Activated CD4-positive, alpha-beta memory T cell treated with anti-CD3 and anti-CD28 coated beads for 36 hours (primary cell): ENCODE measurements at regions of chr10 and their contacts with region 1.

Region 1: DNA sequence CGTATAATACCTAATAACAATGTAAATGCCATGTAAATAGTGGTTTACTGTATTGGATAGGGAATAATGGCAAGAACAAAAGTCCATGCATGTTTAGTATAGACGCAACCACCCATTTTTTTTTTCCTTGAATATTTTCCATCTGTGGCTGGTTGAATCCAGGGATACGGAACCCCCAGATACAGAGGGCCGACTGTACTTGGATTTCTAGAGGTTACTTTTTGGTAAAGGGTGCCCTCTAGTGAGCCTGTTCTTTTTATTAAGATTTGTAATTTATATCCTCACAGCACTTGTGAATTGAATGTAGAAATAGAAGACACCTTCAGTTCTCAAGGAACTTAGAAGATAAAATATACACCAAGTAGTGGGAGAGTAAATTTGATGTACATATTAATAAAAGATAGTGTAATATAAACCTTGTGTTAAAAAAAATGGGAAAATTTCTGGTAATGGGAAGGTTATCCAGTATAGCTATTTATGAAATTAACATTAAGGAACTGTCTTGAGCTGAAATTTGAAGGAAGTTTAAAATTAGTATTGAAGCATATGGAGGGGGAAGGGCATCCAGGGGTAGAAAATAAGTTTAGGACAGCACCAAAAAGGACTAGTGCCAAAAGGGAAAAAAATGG is 32.0 kb downstream of the EXOC6 start:
- DNase-seq: no peak
- H3K4me3 Mint-ChIP-seq: no peak overlapping the region
- H3K27ac Mint-ChIP-seq: no peak overlapping the region
- H3K4me1 Mint-ChIP-seq: peaks cover 21% of the 10 kb centered on the region
- H3K27me3 Mint-ChIP-seq: no peaks in the 10 kb centered on the region

Region 2: GRCh38 chr10:91257310-91257709 is 1623.0 kb before region 1 on chr10:
- CTCF ChIA-PET with region 1: no interaction called
- POLR2A ChIA-PET with region 1: no interaction called
- intact Hi-C with region 1: no loop called
- DNase-seq: no peak
- H3K4me3 Mint-ChIP-seq: no peak overlapping the region
- H3K27ac Mint-ChIP-seq: no peak overlapping the region
- H3K4me1 Mint-ChIP-seq: no peaks in the 10 kb centered on the region
- H3K27me3 Mint-ChIP-seq: no peaks in the 10 kb centered on the region

Region 3: DNA sequence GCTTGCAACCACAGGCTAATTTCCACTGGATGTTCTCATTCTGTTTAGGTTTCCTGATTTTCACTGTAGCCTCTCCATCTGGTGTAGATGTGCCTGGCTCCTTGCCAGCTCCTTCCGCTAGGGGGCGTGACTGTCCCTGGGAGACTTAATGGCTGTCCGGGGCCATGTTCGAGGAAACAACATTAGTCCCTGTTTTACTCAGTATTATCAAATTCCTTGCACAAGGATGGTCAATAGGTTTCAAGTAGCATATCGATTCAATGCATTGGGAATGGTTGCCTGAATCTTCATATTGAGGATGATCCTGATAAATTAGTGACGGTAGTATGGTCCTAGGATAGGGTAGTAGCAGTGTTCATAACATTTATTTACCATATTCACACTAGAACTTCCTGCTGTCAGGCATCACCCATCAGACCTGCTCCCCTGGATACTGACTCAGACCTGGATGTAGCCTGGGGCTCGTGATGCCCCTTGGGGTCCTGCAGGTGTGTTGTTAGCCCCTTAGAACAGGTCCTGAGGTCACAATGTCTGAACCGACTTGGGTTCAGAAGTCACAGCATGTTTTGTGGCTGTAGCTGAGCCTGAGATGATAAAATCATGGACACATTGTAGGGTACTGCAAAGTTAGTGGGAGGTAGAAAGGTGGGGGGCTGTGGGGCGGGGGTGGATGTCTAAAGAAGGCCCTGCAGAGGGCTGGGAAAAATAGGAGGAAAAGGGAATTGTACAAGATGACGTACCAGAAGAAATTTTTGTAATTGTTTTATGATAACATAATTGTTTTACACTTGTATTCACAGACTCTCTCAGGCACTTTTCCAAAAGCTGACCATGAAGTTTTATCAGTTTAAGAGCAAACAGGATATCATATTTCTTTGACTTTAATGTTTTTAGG is 40.9 kb before region 1 on chr10:
- CTCF ChIA-PET with region 1: interaction called, 22 read pairs
- POLR2A ChIA-PET with region 1: no interaction called
- intact Hi-C with region 1: loop called (anchors 1 kb)
- DNase-seq: peak; percentile 75
- H3K4me3 Mint-ChIP-seq: no peak overlapping the region
- H3K27ac Mint-ChIP-seq: no peak overlapping the region
- H3K4me1 Mint-ChIP-seq: peaks cover 4% of the 10 kb centered on the region
- H3K27me3 Mint-ChIP-seq: no peaks in the 10 kb centered on the region

Region 4: GRCh38 chr10:93039721-93040120 is 159.4 kb after region 1 on chr10:
- CTCF ChIA-PET with region 1: no interaction called
- POLR2A ChIA-PET with region 1: no interaction called
- intact Hi-C with region 1: loop called (anchors 2 kb)
- DNase-seq: no peak
- H3K4me3 Mint-ChIP-seq: no peak overlapping the region
- H3K27ac Mint-ChIP-seq: no peak overlapping the region
- H3K4me1 Mint-ChIP-seq: no peaks in the 10 kb centered on the region
- H3K27me3 Mint-ChIP-seq: no peaks in the 10 kb centered on the region

Region 5: GRCh38 chr10:93293999-93294398 is 413.7 kb after region 1 on chr10:
- CTCF ChIA-PET with region 1: no interaction called
- POLR2A ChIA-PET with region 1: no interaction called
- intact Hi-C with region 1: loop called (anchors 10 kb)
- DNase-seq: no peak
- H3K4me3 Mint-ChIP-seq: no peak overlapping the region
- H3K27ac Mint-ChIP-seq: no peak overlapping the region
- H3K4me1 Mint-ChIP-seq: no peaks in the 10 kb centered on the region
- H3K27me3 Mint-ChIP-seq: no peaks in the 10 kb centered on the region